ENCODE measurements at regions of chr9 and their contacts with region 1.

Region 1: DNA sequence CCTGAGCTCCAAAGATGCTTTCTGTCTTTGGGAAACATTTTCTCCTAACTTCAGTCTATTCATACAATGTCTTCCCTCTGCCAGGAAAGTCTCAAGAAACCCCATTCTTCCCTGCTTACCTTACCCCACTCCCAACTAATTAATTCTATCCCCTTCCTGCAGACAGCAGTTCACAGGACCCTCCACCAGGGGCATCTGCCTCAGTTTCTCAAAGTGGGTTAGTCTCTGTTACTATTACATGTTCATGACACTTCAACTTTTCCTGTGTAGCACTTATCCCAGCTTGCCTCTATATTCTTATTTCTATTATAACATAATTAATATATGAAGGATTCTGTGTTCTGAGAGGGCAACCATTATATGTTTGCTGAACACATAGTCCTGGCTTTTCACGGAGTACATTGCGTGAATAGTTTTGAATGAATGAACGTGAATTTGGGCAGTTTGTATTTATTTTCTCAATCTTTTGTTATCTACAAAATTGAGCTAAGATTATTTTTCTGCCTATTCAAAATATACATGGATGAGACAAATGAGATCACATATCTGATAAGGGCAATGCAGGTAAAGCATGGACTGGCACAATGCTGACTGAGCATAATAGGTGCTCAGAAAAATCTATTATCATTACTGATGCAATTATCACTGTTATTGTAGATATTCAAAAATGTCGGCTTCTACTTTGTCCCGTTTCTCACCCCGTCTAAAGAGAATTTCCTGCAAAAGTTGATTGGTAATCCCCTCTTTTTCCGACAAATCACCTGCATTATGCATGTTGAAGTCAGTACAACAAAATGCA is 341.1 kb downstream of the BRINP1 start:
- DNase-seq: no peak
- H3K4me3 ChIP-seq: no peak overlapping the region
- H3K4me3 Mint-ChIP-seq: no peak overlapping the region
- H3K27ac ChIP-seq: no peak overlapping the region
- H3K27ac Mint-ChIP-seq: no peak overlapping the region
- H3K4me1 ChIP-seq: no peaks in the 10 kb centered on the region
- H3K4me1 Mint-ChIP-seq: no peaks in the 10 kb centered on the region
- H3K27me3 ChIP-seq: no peaks in the 10 kb centered on the region
- H3K27me3 Mint-ChIP-seq: peaks cover 0 to 3% (median 1%) of the 10 kb centered on the region in 3 donors
- CTCF ChIP-seq: no peak

Region 2: DNA sequence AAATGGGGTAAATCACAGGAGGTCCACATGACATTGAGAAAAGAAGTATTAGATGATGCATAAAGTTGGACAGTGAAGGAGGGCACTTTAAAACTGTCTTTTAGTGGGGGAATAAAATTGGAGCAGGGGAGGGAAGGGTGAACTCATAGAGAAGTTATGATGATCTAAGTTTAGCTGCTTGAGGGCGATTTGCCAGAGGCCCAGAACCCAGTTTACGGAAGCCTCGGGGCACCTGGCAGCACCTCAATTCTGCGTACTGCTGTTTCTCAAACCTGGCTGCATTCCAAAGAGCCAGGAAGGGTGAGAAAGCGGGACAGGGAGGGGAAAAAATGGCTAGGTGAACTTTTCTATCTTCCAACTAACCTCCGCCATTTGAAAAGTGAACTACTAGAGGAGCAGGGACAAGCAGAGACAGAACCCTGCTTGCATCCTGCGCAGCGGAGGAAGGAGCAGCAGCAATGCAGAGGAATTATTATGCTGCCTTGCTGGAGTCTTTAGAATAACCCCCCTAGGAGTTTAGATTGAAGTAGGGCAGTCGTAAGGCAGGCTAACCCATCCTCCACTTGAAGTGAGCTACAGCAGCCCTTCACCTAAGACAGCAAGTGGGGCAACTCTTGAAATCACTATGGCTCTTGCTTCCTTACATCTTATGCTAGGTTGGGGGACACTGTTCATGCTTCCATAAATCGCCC is 24.4 kb after region 1 on chr9:
- intact Hi-C with region 1: loop called in 1 of 2 experiments (anchors 2 kb)
- DNase-seq: no peak
- H3K4me3 ChIP-seq: no peak overlapping the region
- H3K4me3 Mint-ChIP-seq: no peak overlapping the region
- H3K27ac ChIP-seq: no peak overlapping the region
- H3K27ac Mint-ChIP-seq: no peak overlapping the region
- H3K4me1 ChIP-seq: no peaks in the 10 kb centered on the region
- H3K4me1 Mint-ChIP-seq: no peaks in the 10 kb centered on the region
- H3K27me3 ChIP-seq: no peaks in the 10 kb centered on the region
- H3K27me3 Mint-ChIP-seq: peaks cover 0 to 2% (median 0%) of the 10 kb centered on the region in 3 donors
- CTCF ChIP-seq: no peak

Measured in CD14-positive monocyte (primary cell).